ENCODE measurements at regions of chr1 and their contacts with region 1.

Region 1: GRCh38 chr1:167819849-167820683 is 93.9 kb downstream of the ADCY10 start:
- DNase-seq: peak; percentile 94

Region 2: DNA sequence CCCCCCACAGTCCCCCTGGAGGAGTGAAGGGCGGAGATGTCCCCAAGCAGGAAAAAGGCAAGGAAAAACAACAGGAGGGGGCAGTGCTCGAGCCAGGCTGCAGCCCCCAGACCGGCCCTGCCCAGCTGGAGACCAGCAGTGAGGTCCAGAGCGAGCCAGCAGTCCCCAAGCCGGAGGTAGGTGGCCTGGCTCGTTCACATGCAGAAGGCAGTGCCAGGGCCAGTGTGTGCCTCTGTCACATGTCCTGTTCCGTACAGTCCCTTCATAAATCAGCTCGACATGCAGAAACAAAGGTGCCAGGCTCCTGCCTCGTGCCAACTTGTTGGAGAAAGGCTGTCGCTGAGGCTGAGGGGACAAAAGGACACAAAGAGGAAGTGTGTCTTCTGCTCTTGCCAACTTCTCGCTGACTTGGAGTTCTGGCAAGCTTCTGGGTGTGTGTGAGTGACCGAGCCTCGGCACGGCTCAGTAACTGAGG is 122.4 kb before region 1 on chr1:
- intact Hi-C with region 1: no loop called
- DNase-seq: no peak

Region 3: DNA sequence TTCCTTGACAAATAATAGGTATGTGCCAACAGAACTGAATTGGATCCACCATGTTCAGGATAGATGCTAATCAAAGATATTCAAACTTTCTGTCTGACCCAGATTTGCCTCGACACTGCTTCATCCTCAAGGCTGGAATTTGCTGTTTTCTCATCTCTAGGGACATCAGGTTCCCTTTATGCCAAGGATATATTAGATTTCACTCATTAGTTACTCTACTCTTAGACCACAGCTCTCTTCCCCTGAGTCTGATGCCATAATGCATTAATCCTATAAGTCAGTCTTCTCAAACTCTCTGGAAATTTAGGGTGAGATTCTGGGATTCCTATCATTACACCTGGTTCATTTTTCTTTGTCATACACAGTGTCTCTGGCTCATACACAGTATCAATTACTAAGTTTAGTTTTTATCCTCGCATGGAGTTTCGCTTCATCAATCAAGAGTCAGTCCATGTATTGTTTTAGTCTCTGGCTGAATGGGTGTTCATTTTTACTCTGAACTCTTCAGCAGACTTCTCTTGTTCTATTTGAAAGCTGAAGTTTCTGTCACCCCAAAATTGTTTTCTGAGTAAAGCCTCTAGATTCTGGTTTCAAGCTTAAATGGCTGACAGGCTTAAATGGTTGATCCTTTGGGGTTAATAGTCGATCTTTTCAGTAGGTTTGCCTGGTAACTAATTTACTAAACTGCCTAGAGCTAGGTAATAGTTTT is 107.1 kb after region 1 on chr1:
- intact Hi-C with region 1: loop called in 1 of 2 experiments (anchors 2 kb)
- DNase-seq: no peak